CD4-positive, alpha-beta memory T cell (primary cell): ENCODE measurements at regions of chr9 and their contacts with region 1.

Region 1: GRCh38 chr9:131393622-131394463 is at the start of gene PRRC2B:
- DNase-seq: peak; percentile 80 to 83 (median 82)
- H3K4me3 ChIP-seq: peak within 1 kb of the TSS; percentile 70 to 87
- H3K4me3 Mint-ChIP-seq: peak within 1 kb of the TSS; percentile 87 to 95 (median 90)
- H3K27ac ChIP-seq: peak within 1 kb of the TSS; percentile 76
- H3K27ac Mint-ChIP-seq: peak within 1 kb of the TSS; percentile 94 to 98 (median 96)
- H3K4me1 ChIP-seq: peaks cover 48% of the 10 kb centered on the region
- H3K4me1 Mint-ChIP-seq: peaks cover 38 to 56% (median 42%) of the 10 kb centered on the region in 4 donors
- H3K27me3 ChIP-seq: no peaks in the 10 kb centered on the region
- H3K27me3 Mint-ChIP-seq: no peaks in the 10 kb centered on the region
- total RNA-seq, gene PRRC2B: 335 to 343 TPM

Region 2: GRCh38 chr9:130215341-130216119 is 1178.3 kb before region 1 on chr9:
- CTCF ChIA-PET with region 1: no interaction called
- POLR2A ChIA-PET with region 1: no interaction called
- intact Hi-C with region 1: no loop called
- DNase-seq: peak in 1 of 5 donors; percentile 33
- H3K4me3 ChIP-seq: no peak overlapping the region
- H3K4me3 Mint-ChIP-seq: no peak overlapping the region
- H3K27ac ChIP-seq: no peak overlapping the region
- H3K27ac Mint-ChIP-seq: no peak overlapping the region
- H3K4me1 ChIP-seq: no peaks in the 10 kb centered on the region
- H3K4me1 Mint-ChIP-seq: no peaks in the 10 kb centered on the region
- H3K27me3 ChIP-seq: no peaks in the 10 kb centered on the region
- H3K27me3 Mint-ChIP-seq: peaks cover 0 to 2% of the 10 kb centered on the region in 2 donors

Region 3: DNA sequence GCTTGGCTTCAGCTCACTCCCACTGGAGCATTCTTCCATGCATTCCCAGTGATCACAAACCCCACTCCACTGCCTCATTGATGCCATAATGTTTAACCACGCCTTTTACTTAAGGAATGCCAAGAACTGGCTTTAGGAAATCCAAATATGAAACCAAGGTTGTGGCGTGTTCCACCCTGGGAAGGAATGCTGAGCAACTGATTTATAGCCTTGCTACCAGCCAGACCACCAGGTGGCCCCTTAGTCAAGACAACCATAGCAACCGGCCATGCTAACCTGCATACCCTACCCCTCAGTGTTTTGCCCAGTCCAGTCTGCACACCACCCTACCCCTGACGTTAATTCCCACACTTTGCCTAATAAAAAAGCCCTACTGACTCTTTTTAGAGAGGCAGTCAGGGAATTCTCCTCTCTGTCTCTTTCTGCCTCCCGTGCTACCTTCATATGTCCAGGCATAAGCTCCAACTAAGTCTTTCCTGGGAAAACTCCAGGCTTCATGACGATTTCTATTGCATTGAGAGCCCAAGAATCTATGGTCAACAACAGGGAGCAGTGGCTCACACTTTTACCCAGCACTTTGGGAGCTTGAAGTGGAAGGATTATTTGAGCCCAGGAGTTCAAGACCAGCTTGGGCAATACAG is 27.0 kb before region 1 on chr9:
- CTCF ChIA-PET with region 1: interaction called, 7 read pairs
- POLR2A ChIA-PET with region 1: interaction called, 80 read pairs
- intact Hi-C with region 1: loop called (anchors 2 kb)
- DNase-seq: no peak
- H3K4me3 ChIP-seq: no peak overlapping the region
- H3K4me3 Mint-ChIP-seq: no peak overlapping the region
- H3K27ac ChIP-seq: no peak overlapping the region
- H3K27ac Mint-ChIP-seq: no peak overlapping the region
- H3K4me1 ChIP-seq: peaks cover 1% of the 10 kb centered on the region
- H3K4me1 Mint-ChIP-seq: peaks cover 2 to 5% (median 3%) of the 10 kb centered on the region in 4 donors
- H3K27me3 ChIP-seq: no peaks in the 10 kb centered on the region
- H3K27me3 Mint-ChIP-seq: no peaks in the 10 kb centered on the region

Region 4: DNA sequence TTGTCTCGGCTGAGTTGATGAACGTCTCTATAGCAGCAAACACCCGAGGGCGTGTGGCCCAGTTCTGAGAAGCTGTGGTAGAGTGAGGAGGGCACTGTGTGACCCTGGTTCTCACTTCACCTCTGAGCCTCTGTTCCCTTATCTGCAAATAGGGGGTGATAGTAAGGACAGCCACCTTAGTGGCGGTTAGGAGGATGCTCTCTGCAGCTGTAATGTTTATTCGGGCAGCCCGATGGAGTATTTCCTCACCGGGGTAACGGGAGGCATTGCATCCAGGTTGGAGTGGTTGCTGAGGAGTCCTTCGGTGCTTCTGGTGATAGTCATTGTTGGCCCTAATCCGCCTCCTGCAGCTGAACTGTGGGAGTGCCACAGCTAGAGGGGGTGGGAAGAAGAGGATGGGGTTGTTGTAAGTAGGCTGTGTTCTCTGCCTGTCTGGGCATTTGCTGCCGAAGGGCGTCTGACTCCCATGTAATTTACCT is 13.9 kb after region 1 on chr9:
- CTCF ChIA-PET with region 1: interaction called, 11 read pairs
- POLR2A ChIA-PET with region 1: interaction called, 83 read pairs
- intact Hi-C with region 1: loop called (anchors 1 kb)
- DNase-seq: peak; percentile 54 to 68 (median 59)
- H3K4me3 ChIP-seq: peak overlapping the region in 1 of 2 donors; percentile 6
- H3K4me3 Mint-ChIP-seq: peak overlapping the region; percentile 72 to 89 (median 82)
- H3K27ac ChIP-seq: peak overlapping the region; percentile 46
- H3K27ac Mint-ChIP-seq: peak overlapping the region; percentile 62 to 92 (median 88)
- H3K4me1 ChIP-seq: peaks cover 95% of the 10 kb centered on the region
- H3K4me1 Mint-ChIP-seq: peaks cover 70 to 92% (median 80%) of the 10 kb centered on the region in 4 donors
- H3K27me3 ChIP-seq: no peaks in the 10 kb centered on the region
- H3K27me3 Mint-ChIP-seq: no peaks in the 10 kb centered on the region

Region 5: DNA sequence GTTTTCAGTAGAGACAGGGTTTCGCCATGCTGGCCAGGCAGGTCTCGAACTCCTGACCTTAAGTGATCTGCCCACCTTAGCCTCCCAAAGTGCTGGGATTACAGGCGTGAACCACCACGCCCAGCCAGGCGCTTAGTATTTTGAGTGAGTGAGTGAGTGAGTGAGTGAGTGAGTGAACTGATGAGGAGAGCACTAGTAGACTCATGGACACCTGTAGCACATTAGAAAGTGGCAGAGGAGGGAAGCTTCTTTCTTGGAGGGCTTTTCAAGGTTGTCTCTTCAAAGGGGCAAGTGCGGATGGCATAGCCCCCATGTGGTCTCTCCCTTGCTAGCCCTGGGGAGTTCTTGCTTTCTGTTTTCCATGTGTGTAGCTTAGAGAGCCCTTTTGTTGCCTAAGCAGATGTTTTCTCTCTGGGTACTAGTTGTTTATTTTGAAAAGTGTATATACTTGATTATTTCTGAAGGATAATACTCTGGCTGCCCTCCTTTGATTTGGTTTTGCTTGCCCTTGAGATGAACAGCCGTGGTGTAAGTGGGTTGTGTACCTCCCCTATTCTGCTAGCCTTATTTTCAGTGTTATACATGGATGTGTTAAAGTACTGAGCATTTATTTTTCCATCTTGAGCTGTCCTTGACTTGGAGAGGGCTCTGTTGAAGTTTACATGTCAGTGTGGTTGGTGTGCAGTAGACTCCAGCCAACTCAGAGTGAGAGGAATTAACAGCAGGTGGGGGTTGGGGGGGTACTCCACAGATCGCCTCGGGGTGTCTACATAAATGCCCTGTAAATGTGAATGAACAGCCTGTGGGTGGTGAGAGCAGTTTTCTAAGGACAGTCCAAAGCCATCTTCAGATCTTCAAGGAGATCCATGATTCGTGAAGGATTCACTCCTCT is 35.5 kb after region 1 on chr9:
- CTCF ChIA-PET with region 1: interaction called, 3 read pairs
- POLR2A ChIA-PET with region 1: interaction called, 4 read pairs
- intact Hi-C with region 1: loop called (anchors 5 kb)
- DNase-seq: no peak
- H3K4me3 ChIP-seq: no peak overlapping the region
- H3K4me3 Mint-ChIP-seq: peak overlapping the region in 3 of 8 donors; percentile 15 to 49 (median 31)
- H3K27ac ChIP-seq: no peak overlapping the region
- H3K27ac Mint-ChIP-seq: peak overlapping the region in 6 of 7 donors; percentile 23 to 80 (median 72)
- H3K4me1 ChIP-seq: peaks cover 35% of the 10 kb centered on the region
- H3K4me1 Mint-ChIP-seq: peaks cover 29 to 55% (median 34%) of the 10 kb centered on the region in 4 donors
- H3K27me3 ChIP-seq: no peaks in the 10 kb centered on the region
- H3K27me3 Mint-ChIP-seq: no peaks in the 10 kb centered on the region

Region 6: DNA sequence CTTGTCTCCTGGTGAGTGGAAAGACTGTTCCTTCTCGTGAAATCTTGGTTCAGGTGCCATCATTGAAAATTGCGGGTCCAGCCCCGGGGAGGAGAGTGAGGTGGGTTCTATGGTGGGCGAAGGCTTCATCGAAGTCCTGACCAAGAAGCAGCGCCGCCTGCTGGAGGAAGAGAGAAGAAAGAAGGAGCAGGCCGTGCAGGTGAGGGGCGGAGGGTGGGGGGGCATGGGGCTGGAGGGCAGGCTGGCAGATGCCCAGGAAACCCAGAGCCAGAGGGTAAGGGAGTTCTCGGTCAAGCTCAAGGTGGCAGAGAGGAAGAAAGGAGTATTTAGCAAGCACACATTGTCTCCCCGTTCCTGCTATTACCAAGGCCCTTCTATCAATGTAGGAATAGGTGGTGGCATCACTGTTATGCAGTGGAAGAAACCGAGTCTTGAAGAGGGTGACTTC is 84.6 kb after region 1 on chr9:
- CTCF ChIA-PET with region 1: no interaction called
- POLR2A ChIA-PET with region 1: interaction called, 4 read pairs
- intact Hi-C with region 1: loop called (anchors 2 kb)
- DNase-seq: peak in 4 of 5 donors; percentile 39 to 55 (median 48)
- H3K4me3 ChIP-seq: no peak overlapping the region
- H3K4me3 Mint-ChIP-seq: peak overlapping the region in 1 of 8 donors; percentile 23
- H3K27ac ChIP-seq: no peak overlapping the region
- H3K27ac Mint-ChIP-seq: peak overlapping the region in 4 of 7 donors; percentile 17 to 80 (median 66)
- H3K4me1 ChIP-seq: no peaks in the 10 kb centered on the region
- H3K4me1 Mint-ChIP-seq: peaks cover 0 to 5% (median under 1%) of the 10 kb centered on the region in 4 donors
- H3K27me3 ChIP-seq: no peaks in the 10 kb centered on the region
- H3K27me3 Mint-ChIP-seq: no peaks in the 10 kb centered on the region

Region 7: GRCh38 chr9:132354637-132355355 is 961.0 kb after region 1 on chr9 and contains the start of gene SETX:
- CTCF ChIA-PET with region 1: no interaction called
- POLR2A ChIA-PET with region 1: interaction called, 7 read pairs
- intact Hi-C with region 1: loop called (anchors 10 kb)
- DNase-seq: peak; percentile 89 to 93 (median 91)
- H3K4me3 ChIP-seq: peak within 1 kb of the TSS; percentile 66 to 86
- H3K4me3 Mint-ChIP-seq: peak within 1 kb of the TSS; percentile 91 to 95 (median 93)
- H3K27ac ChIP-seq: peak within 1 kb of the TSS; percentile 95
- H3K27ac Mint-ChIP-seq: peak within 1 kb of the TSS; percentile 92 to 100 (median 96)
- H3K4me1 ChIP-seq: peaks cover 38% of the 10 kb centered on the region
- H3K4me1 Mint-ChIP-seq: peaks cover 30 to 53% (median 38%) of the 10 kb centered on the region in 4 donors
- H3K27me3 ChIP-seq: no peaks in the 10 kb centered on the region
- H3K27me3 Mint-ChIP-seq: no peaks in the 10 kb centered on the region
- total RNA-seq, gene SETX: 91.3 to 94.3 TPM